ENCODE measurements at regions of chr10 and their contacts with region 1.

Region 1: DNA sequence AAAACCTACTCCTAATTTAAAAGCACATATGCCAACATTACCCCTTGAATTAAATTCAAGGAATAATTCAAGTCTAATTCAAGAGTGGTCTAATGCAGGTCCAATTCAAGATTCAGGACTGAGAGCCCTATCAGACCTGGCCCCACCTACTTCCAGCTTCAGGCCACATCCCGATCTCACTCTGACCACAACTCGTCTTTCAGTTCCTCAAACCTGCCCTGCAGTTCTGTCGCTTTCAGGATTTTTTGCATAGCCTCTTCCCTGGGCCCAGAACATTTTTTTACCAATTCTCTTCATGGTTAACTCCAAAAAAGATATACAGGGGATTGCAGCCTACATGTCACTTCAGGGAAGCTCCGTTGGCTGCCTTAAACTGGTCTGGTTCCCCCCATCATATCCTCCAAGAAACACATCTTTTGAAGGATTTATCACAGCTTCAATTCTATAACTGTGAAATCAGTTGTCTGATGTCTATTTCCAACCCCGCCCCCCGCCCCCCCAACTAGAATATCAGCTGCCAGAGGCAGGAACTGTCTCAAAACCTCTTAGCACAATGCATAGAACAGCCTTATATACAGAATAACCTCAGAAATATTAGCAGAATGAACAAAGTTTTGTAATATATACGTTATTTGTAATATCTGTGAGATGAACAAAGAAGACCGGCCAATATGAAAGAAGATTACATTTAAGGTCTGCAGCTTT is 20.8 kb downstream of the CCDC6 start:
- DNase-seq: no peak
- ATAC-seq: no peak
- H3K4me3 ChIP-seq: no peak overlapping the region
- H3K27ac ChIP-seq: no peak overlapping the region
- H3K4me1 ChIP-seq: no peaks in the 10 kb centered on the region
- H3K27me3 ChIP-seq: no peaks in the 10 kb centered on the region
- CTCF ChIP-seq: no peak
- POLR2A ChIP-seq: no peak
- RAD21 ChIP-seq: no peak

Region 2: DNA sequence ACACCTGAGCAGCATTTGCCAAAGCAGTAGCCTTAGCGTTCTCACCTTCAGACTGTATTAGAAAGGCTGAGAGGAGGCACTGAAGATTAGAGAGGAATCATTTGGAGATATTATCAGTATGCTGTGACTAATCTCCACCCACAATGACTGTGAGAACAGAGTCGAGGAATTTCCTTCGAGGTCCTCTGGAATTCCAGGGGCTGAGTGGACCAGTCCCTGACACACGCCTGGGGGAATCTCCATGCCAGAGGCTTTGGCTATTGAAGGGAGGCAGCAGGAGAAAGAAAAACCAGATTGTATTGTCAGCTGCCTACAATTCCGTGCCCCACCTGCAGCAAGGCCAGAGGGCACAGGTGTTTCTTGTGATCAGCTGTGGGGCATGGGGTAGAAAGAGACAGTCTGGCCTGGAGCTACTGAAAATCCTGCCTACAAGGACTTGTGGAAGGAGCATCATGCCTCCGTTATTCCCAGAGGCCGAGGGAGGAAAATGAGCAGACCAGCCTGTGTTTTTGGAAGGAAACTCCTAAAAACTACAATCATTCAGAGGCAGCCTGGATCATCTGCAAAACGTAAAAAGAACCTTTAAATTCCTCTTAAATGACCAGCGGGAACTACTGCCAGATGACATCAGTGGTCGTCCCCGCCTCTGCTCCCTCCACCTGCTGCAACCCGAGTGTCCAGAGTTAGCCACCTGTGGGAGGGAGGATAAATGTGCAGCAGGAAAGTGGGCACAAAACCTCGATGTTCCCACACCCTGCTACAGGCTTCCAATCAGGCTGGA is 529.4 kb after region 1 on chr10:
- CTCF ChIA-PET with region 1: no interaction called
- POLR2A ChIA-PET with region 1: no interaction called
- dilution Hi-C with region 1: no loop called
- in situ Hi-C with region 1: loop called (anchors 25 kb)
- intact Hi-C with region 1: no loop called
- DNase-seq: peak; percentile 92
- ATAC-seq: peak; percentile 93
- H3K4me3 ChIP-seq: no peak overlapping the region
- H3K27ac ChIP-seq: no peak overlapping the region
- H3K4me1 ChIP-seq: peaks cover 11% of the 10 kb centered on the region
- H3K27me3 ChIP-seq: no peaks in the 10 kb centered on the region
- CTCF ChIP-seq: no peak
- POLR2A ChIP-seq: no peak
- RAD21 ChIP-seq: peak; percentile 21